ENCODE measurements at regions of chr2 and their contacts with region 1.

Region 1: DNA sequence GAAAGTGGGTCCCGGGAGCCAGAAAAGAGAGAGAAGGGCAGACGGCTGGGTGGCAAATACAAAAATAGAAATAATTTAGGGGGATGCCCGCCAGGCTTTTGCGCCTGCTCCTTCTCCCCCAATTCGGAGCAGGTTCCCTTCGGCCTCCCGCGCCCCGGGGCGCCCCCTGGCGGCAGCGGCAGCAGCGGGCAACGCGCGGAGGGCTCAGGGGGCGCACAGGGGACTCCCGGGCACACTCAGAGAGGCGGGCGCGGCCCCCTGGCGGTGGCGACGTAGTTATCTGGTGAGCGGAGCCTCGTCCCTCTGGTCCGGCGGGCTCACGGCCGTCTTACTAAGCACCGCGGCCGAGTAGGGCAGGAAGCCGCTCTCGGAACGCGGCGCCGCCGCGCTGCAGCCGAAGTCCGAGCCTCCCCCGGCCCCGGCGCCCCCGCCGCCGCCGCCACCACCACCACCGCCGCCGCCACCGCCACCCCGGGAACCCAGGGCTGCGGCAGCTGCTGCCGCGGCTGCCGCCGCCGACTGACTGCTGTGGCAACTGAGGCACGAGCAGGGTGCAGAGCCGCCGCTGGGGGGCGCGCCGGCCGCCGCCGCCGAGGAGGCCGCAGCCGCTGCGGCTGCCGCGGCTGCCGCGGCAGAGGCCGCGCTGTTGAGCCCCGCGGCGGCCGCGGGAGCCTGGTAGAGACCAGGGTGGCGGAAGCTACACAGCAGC is 3.8 kb downstream of the EVX2 start:
- DNase-seq: peak; percentile 59
- ATAC-seq: peak; percentile 99
- H3K4me3 ChIP-seq: peak overlapping the region; percentile 10 to 45
- H3K27ac ChIP-seq: no peak overlapping the region; the same call in 1 of the 2 replicates
- H3K4me1 ChIP-seq: no peaks in the 10 kb centered on the region
- H3K27me3 ChIP-seq: no peaks in the 10 kb centered on the region
- CTCF ChIP-seq: peak; percentile 90 to 98 (median 97)
- POLR2A ChIP-seq: no peak
- RAD21 ChIP-seq: peak; percentile 75

Region 2: DNA sequence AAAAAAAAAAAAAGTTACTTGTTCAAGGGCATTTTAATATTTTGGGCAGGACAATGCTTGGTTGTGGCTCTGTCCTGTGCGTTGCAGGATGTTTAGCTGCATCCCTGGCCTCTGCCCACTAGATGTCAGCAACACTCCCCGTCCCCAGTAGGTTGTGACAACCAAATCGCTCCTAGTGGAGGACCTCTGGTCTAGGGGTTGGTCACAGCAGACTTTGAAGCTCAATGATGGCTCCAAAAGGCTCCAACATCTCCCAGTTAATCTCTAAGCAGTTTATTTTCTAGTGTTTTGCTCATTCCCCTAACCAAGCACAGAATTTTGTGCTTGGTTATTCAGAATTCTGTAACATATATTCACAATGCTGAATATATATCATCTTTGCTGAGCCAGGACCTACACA is 1382.7 kb before region 1 on chr2:
- CTCF ChIA-PET with region 1: no interaction called
- POLR2A ChIA-PET with region 1: no interaction called
- RAD21 ChIA-PET with region 1: no interaction called
- intact Hi-C with region 1: loop called (anchors 5 kb)
- DNase-seq: peak; percentile 59
- ATAC-seq: peak; percentile 100
- H3K4me3 ChIP-seq: no peak overlapping the region
- H3K27ac ChIP-seq: no peak overlapping the region
- H3K4me1 ChIP-seq: no peaks in the 10 kb centered on the region
- H3K27me3 ChIP-seq: peaks cover 3% of the 10 kb centered on the region; the same call in 1 of the 2 replicates
- CTCF ChIP-seq: peak; percentile 75 to 93 (median 84)
- POLR2A ChIP-seq: no peak
- RAD21 ChIP-seq: peak; percentile 70

Region 3: GRCh38 chr2:175247159-175247558 is 832.8 kb before region 1 on chr2:
- CTCF ChIA-PET with region 1: no interaction called
- POLR2A ChIA-PET with region 1: no interaction called
- RAD21 ChIA-PET with region 1: no interaction called
- intact Hi-C with region 1: no loop called
- DNase-seq: no peak
- ATAC-seq: no peak
- H3K4me3 ChIP-seq: no peak overlapping the region
- H3K27ac ChIP-seq: no peak overlapping the region
- H3K4me1 ChIP-seq: no peaks in the 10 kb centered on the region
- H3K27me3 ChIP-seq: no peaks in the 10 kb centered on the region
- CTCF ChIP-seq: no peak
- POLR2A ChIP-seq: no peak
- RAD21 ChIP-seq: no peak

Region 4: GRCh38 chr2:175366815-175367214 is 713.2 kb before region 1 on chr2:
- CTCF ChIA-PET with region 1: no interaction called
- POLR2A ChIA-PET with region 1: no interaction called
- RAD21 ChIA-PET with region 1: no interaction called
- intact Hi-C with region 1: loop called (anchors 1 kb)
- DNase-seq: peak; percentile 38
- ATAC-seq: peak; percentile 100
- H3K4me3 ChIP-seq: no peak overlapping the region
- H3K27ac ChIP-seq: no peak overlapping the region
- H3K4me1 ChIP-seq: no peaks in the 10 kb centered on the region
- H3K27me3 ChIP-seq: no peaks in the 10 kb centered on the region
- CTCF ChIP-seq: peak; percentile 80 to 90 (median 87)
- POLR2A ChIP-seq: no peak
- RAD21 ChIP-seq: peak; percentile 88

Region 5: DNA sequence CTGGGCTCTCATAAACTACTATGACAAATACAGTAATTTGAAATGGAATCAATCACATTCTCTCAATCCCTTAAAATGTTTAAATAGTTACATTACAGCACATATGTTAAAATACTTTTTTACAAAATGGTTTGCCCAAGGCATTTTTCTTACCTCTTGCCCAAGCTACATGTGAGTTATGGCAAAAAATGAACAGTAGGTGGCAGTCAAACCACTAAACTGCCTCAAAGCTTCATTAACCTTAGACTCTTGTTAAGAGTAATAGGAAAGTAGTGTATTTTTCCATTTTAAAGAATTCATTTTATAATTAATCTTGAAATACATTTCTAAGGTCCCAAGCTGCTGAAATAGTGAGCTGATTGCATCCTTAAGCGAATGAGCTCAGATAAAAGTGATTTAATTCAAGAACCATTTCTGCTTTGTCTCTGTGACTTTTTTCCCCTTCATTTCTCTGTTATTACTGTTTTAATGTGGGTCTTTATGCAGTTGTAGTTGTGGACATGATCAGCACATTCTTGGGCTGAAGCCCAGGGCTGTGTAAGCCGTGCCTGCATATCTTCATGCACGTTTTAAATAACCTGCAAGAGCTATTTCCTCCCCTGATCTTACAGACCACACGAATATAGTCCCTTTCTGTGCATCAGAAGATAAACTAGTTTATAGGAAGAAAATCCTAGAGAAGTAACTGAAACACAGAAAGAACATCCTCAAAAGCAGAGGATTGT is 389.7 kb before region 1 on chr2:
- CTCF ChIA-PET with region 1: interaction called, 14 read pairs
- POLR2A ChIA-PET with region 1: no interaction called
- RAD21 ChIA-PET with region 1: no interaction called
- intact Hi-C with region 1: loop called (anchors 1 kb)
- DNase-seq: peak; percentile 58
- ATAC-seq: peak; percentile 78
- H3K4me3 ChIP-seq: no peak overlapping the region
- H3K27ac ChIP-seq: no peak overlapping the region
- H3K4me1 ChIP-seq: no peaks in the 10 kb centered on the region
- H3K27me3 ChIP-seq: no peaks in the 10 kb centered on the region
- CTCF ChIP-seq: peak; percentile 56 to 80 (median 78)
- POLR2A ChIP-seq: no peak
- RAD21 ChIP-seq: peak; percentile 78

Measured in HCT116 (cell line).